Natural killer cell (primary cell): ENCODE measurements at regions of chr7 and their contacts with region 1.

Region 1: GRCh38 chr7:138002096-138002827 is 376 bp upstream of the CREB3L2 start:
- DNase-seq: peak; percentile 98 to 100
- ATAC-seq: peak; percentile 89 to 97 (median 92)
- H3K4me3 ChIP-seq: peak overlapping the region; percentile 97
- H3K4me3 Mint-ChIP-seq: peak overlapping the region; percentile 99
- H3K27ac ChIP-seq: peak overlapping the region; percentile 86
- H3K27ac Mint-ChIP-seq: peak overlapping the region; percentile 94 to 96
- H3K4me1 ChIP-seq: peaks cover 10% of the 10 kb centered on the region
- H3K4me1 Mint-ChIP-seq: peaks cover 38 to 40% of the 10 kb centered on the region in 2 donors
- H3K27me3 ChIP-seq: no peaks in the 10 kb centered on the region
- H3K27me3 Mint-ChIP-seq: no peaks in the 10 kb centered on the region
- CTCF ChIP-seq: peak; percentile 96

Region 2: DNA sequence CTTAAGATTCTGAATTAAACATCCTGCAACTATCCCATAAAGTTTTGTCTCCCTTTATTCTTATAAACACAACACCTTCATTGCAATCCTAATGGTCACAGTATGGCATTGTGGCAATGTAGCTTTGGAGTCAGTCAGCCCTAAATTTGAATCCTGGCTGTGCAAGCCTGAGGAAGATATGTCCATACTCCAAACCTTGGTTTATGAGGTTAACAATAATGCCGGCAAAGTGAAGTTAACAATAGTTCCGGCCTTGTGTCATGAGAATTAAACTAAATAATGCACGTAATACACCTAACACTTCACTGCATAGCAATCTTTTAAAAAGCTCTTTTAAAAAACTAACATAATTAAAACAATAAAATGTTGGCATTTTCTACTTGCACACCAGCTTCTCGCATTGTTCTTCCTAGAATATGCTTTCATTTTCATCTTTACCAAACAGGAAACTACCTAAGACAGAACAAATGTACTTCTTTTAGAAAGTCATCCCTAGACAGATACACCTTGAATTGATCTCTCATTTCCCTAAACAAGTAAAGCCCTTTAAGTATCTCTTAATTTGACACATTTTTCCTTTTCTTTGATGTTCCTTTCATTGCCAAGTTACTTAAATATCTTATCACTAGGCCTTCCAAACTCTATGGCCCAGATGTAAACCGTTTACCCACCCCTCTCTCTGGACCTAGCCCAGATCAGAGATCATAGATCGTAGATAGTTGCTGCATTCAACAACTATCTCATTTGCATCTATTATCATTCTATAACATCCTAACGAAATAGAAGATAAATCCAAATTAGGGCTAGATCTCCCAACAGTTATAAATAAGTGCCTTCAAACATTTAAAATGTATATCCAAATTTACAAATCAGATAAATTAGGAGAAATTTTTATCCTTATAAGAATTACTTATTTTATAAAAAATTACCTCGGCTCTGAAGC is 67.0 kb before region 1 on chr7:
- intact Hi-C with region 1: loop called (anchors 2 kb)
- DNase-seq: peak in 1 of 2 donors; percentile 58
- ATAC-seq: peak; percentile 70 to 74 (median 72)
- H3K4me3 ChIP-seq: peak overlapping the region; percentile 52
- H3K4me3 Mint-ChIP-seq: peak overlapping the region; percentile 93
- H3K27ac ChIP-seq: peak overlapping the region; percentile 91
- H3K27ac Mint-ChIP-seq: peak overlapping the region; percentile 95 to 97
- H3K4me1 ChIP-seq: peaks cover 25% of the 10 kb centered on the region
- H3K4me1 Mint-ChIP-seq: peaks cover 52 to 56% of the 10 kb centered on the region in 2 donors
- H3K27me3 ChIP-seq: no peaks in the 10 kb centered on the region
- H3K27me3 Mint-ChIP-seq: no peaks in the 10 kb centered on the region
- CTCF ChIP-seq: no peak